CD4-positive, alpha-beta memory T cell (primary cell): ENCODE measurements at regions of chr9 and their contacts with region 1.

Region 1: DNA sequence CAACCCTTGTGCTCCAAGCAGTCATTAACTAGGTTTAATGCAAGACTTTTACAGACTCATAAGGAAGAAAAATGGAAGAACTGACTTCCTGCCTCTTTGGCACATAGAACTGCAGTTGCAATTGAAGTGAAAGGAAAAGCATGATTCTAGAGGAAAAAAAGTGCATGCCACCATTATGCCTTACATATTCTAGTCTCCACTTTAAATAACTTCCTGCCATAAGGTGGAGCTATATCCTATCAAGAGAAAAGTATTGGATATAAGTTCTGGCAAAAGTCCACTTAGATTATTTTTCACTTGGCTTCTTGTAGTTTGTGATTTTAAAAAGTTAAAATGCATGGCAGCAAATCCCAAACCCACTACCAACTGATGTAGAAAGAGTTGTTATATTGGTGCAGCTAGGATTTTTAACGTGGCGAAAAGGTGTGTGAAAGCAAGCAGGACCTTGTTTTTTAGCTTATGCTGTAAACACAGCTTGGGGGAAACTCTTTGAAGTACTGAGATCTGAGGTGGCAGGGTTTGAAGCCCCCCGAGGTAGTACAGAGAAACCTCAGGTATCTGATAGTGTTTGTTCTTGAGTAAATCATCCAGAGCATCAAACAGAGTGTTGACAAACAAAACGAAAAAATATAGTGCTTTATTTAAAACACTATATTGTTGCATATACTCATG is 117.9 kb downstream of the ANXA1 start:
- DNase-seq: no peak
- H3K4me3 ChIP-seq: no peak overlapping the region
- H3K4me3 Mint-ChIP-seq: no peak overlapping the region
- H3K27ac ChIP-seq: no peak overlapping the region
- H3K27ac Mint-ChIP-seq: no peak overlapping the region
- H3K4me1 ChIP-seq: no peaks in the 10 kb centered on the region
- H3K4me1 Mint-ChIP-seq: no peaks in the 10 kb centered on the region
- H3K27me3 ChIP-seq: no peaks in the 10 kb centered on the region
- H3K27me3 Mint-ChIP-seq: peaks cover 0 to 3% of the 10 kb centered on the region in 2 donors

Region 2: GRCh38 chr9:73011181-73011750 is 258.3 kb before region 1 on chr9:
- CTCF ChIA-PET with region 1: no interaction called
- POLR2A ChIA-PET with region 1: no interaction called
- intact Hi-C with region 1: no loop called
- DNase-seq: no peak
- H3K4me3 ChIP-seq: no peak overlapping the region
- H3K4me3 Mint-ChIP-seq: no peak overlapping the region
- H3K27ac ChIP-seq: no peak overlapping the region
- H3K27ac Mint-ChIP-seq: no peak overlapping the region
- H3K4me1 ChIP-seq: no peaks in the 10 kb centered on the region
- H3K4me1 Mint-ChIP-seq: no peaks in the 10 kb centered on the region
- H3K27me3 ChIP-seq: no peaks in the 10 kb centered on the region
- H3K27me3 Mint-ChIP-seq: peaks cover 22 to 26% of the 10 kb centered on the region in 2 donors

Region 3: GRCh38 chr9:73327149-73327548 is 57.6 kb after region 1 on chr9:
- CTCF ChIA-PET with region 1: no interaction called
- POLR2A ChIA-PET with region 1: no interaction called
- intact Hi-C with region 1: loop called (anchors 10 kb)
- DNase-seq: no peak
- H3K4me3 ChIP-seq: no peak overlapping the region
- H3K4me3 Mint-ChIP-seq: no peak overlapping the region
- H3K27ac ChIP-seq: no peak overlapping the region
- H3K27ac Mint-ChIP-seq: no peak overlapping the region
- H3K4me1 ChIP-seq: no peaks in the 10 kb centered on the region
- H3K4me1 Mint-ChIP-seq: no peaks in the 10 kb centered on the region
- H3K27me3 ChIP-seq: no peaks in the 10 kb centered on the region
- H3K27me3 Mint-ChIP-seq: no peaks in the 10 kb centered on the region